GM12878 (cell line): ENCODE measurements at regions of chr11 and their contacts with region 1.

Region 1: GRCh38 chr11:109971184-109971523 is 122.0 kb upstream of the ZC3H12C start:
- DNase-seq: no peak
- ATAC-seq: peak; percentile 32
- H3K4me3 ChIP-seq: peak overlapping the region; percentile 8; the same call in 1 of the 2 replicates
- H3K27ac ChIP-seq: peak overlapping the region; percentile 56
- H3K4me1 ChIP-seq: peaks cover 38% of the 10 kb centered on the region
- H3K27me3 ChIP-seq: no peaks in the 10 kb centered on the region
- CTCF ChIP-seq: no peak
- EP300 ChIP-seq: no peak
- POLR2A ChIP-seq: no peak
- RAD21 ChIP-seq: no peak

Region 2: GRCh38 chr11:109960831-109961230 is 10.3 kb before region 1 on chr11:
- CTCF ChIA-PET with region 1: interaction called, 36 read pairs
- POLR2A ChIA-PET with region 1: interaction called, 42 read pairs
- RAD21 ChIA-PET with region 1: interaction called, 185 read pairs
- SMC1A ChIA-PET with region 1: interaction called, 223 read pairs
- in situ Hi-C with region 1: no loop called
- intact Hi-C with region 1: loop called (anchors 1 kb)
- DNase-seq: no peak
- ATAC-seq: no peak
- H3K4me3 ChIP-seq: no peak overlapping the region
- H3K27ac ChIP-seq: no peak overlapping the region
- H3K4me1 ChIP-seq: peaks cover 15% of the 10 kb centered on the region
- H3K27me3 ChIP-seq: no peaks in the 10 kb centered on the region
- CTCF ChIP-seq: no peak
- EP300 ChIP-seq: no peak
- POLR2A ChIP-seq: no peak
- RAD21 ChIP-seq: no peak

Region 3: GRCh38 chr11:109993786-109994185 is 22.6 kb after region 1 on chr11:
- CTCF ChIA-PET with region 1: interaction called, 32 read pairs
- POLR2A ChIA-PET with region 1: interaction called, 28 read pairs
- RAD21 ChIA-PET with region 1: interaction called, 85 read pairs
- SMC1A ChIA-PET with region 1: interaction called, 117 read pairs
- in situ Hi-C with region 1: no loop called
- intact Hi-C with region 1: loop called (anchors 2 kb)
- DNase-seq: no peak
- ATAC-seq: no peak
- H3K4me3 ChIP-seq: no peak overlapping the region
- H3K27ac ChIP-seq: no peak overlapping the region
- H3K4me1 ChIP-seq: no peaks in the 10 kb centered on the region
- H3K27me3 ChIP-seq: no peaks in the 10 kb centered on the region
- CTCF ChIP-seq: no peak
- EP300 ChIP-seq: no peak
- POLR2A ChIP-seq: no peak
- RAD21 ChIP-seq: no peak

Region 4: GRCh38 chr11:110077831-110078325 is 106.7 kb after region 1 on chr11:
- CTCF ChIA-PET with region 1: no interaction called
- POLR2A ChIA-PET with region 1: interaction called, 14 read pairs
- RAD21 ChIA-PET with region 1: interaction called, 30 read pairs
- SMC1A ChIA-PET with region 1: interaction called, 30 read pairs
- in situ Hi-C with region 1: no loop called
- intact Hi-C with region 1: no loop called
- DNase-seq: peak; percentile 86
- ATAC-seq: peak; percentile 88
- H3K4me3 ChIP-seq: no peak overlapping the region
- H3K27ac ChIP-seq: peak overlapping the region; percentile 51
- H3K4me1 ChIP-seq: peaks cover 16% of the 10 kb centered on the region
- H3K27me3 ChIP-seq: no peaks in the 10 kb centered on the region
- CTCF ChIP-seq: no peak
- EP300 ChIP-seq: peak; percentile 84 to 91
- POLR2A ChIP-seq: no peak
- RAD21 ChIP-seq: no peak; the same call in 1 of the 2 replicates

Region 5: DNA sequence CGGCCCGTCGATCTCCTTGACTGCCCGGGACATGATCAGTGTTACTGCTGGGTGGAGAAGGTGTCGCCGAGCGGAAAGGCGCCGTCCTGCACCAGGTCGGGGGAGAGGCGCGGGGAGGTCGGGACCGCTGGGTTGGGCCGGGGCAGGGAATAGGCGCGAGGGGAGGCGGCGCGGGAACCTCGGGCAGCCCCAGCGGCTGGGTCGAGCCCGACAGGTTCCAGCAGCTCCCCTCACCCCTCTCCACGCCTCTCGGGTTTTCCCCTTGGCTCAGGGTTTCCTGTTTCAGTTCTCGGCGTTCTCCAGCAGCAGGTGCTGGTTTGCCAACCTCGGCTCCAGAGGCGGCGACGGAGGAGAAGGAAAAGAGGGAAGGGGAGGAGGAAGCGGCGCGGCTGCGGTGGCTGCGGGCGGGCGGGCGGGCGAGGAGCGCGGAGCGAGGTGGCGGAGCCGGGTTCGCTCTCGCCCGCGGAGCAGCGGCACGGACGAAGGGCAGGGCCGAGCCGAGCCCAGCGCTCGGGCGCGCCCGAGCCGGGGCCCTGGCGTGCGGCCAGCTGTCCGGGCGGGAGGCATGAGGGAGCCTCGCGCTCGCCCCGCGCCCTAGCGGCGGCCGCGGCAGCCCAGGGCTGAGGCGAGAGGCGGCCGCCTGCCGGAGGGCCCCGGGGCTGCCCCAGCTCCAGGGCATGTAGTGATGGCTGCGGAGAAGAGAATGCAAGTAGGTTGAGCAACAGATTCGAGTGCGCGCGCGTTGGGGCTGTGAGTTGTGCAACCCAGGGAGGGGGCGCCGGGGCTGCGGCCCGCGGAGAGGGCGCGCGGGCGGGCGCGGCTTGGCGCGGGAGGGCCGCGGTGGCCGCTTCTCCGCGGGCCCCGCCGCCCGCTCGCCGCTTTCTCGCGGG is 121.6 kb after region 1 on chr11 and contains the start of gene ZC3H12C:
- CTCF ChIA-PET with region 1: interaction called, 3 read pairs
- POLR2A ChIA-PET with region 1: interaction called, 16 read pairs
- RAD21 ChIA-PET with region 1: interaction called, 40 read pairs
- SMC1A ChIA-PET with region 1: interaction called, 28 read pairs
- in situ Hi-C with region 1: no loop called
- intact Hi-C with region 1: no loop called
- DNase-seq: no peak
- ATAC-seq: peak; percentile 60
- H3K4me3 ChIP-seq: peak within 1 kb of the TSS; percentile 72
- H3K27ac ChIP-seq: peak within 1 kb of the TSS; percentile 75
- H3K4me1 ChIP-seq: peaks cover 21% of the 10 kb centered on the region
- H3K27me3 ChIP-seq: no peaks in the 10 kb centered on the region
- CTCF ChIP-seq: peak; percentile 19 to 44 (median 40); a peak in 5 of 6 replicates
- EP300 ChIP-seq: peak; percentile 58 to 63; a peak in 2 of 4 replicates
- POLR2A ChIP-seq: peak; percentile 80
- RAD21 ChIP-seq: peak; percentile 49
- polyA plus RNA-seq, gene ZC3H12C: 0.31 to 0.68 TPM